ENCODE measurements at regions of chr14 and their contacts with region 1.

Region 1: GRCh38 chr14:103584326-103584915 is 21.7 kb downstream of the COA8 start:
- DNase-seq: no peak
- ATAC-seq: no peak
- H3K4me3 ChIP-seq: no peak overlapping the region
- H3K4me3 Mint-ChIP-seq: no peak overlapping the region
- H3K27ac ChIP-seq: no peak overlapping the region
- H3K27ac Mint-ChIP-seq: no peak overlapping the region
- H3K4me1 ChIP-seq: no peaks in the 10 kb centered on the region
- H3K4me1 Mint-ChIP-seq: peaks cover 0 to 2% (median 1%) of the 10 kb centered on the region in 3 donors
- H3K27me3 ChIP-seq: no peaks in the 10 kb centered on the region
- H3K27me3 Mint-ChIP-seq: no peaks in the 10 kb centered on the region

Region 2: DNA sequence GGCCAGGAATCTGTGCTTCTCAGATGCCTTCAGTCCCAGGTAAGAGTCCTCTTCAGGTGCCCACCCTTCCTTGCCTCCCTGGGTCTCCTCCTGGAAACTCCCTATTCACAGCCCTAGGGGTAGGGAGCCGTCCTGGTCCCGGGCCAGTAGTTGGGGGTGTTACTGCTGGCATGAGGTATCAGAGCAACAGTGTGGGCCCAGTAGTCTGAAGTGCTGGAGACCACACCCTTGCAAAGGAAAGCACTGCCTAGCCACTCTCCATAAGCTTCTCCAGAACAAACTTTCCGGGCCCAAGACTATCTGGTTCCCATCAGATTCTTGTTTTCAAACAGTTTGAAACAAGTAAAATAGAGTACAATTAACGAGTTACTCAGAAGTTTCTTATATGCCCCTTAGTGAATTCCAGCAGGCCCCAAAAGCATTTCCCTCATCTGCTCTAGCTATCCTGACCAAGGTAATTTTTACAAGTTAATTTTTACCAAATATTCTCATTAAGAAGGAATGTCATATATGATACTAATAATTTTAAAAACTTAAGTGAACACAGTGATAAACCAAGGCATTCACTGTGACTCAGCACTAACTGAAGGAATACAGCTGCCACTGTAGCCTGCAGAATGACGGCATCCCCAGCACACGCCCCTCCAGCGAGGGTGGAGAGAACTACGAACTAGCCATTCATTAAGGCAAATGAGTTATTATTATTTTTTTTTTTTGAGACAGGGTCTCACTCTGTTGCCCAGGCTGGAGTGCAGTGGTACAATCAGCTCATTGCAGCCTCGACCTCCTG is 1328.8 kb before region 1 on chr14:
- CTCF ChIA-PET with region 1: no interaction called
- POLR2A ChIA-PET with region 1: no interaction called
- DNase-seq: no peak
- ATAC-seq: no peak
- H3K4me3 ChIP-seq: no peak overlapping the region
- H3K4me3 Mint-ChIP-seq: no peak overlapping the region
- H3K27ac ChIP-seq: no peak overlapping the region
- H3K27ac Mint-ChIP-seq: no peak overlapping the region
- H3K4me1 ChIP-seq: no peaks in the 10 kb centered on the region
- H3K4me1 Mint-ChIP-seq: no peaks in the 10 kb centered on the region
- H3K27me3 ChIP-seq: peaks cover 0 to 8% of the 10 kb centered on the region in 2 experiments
- H3K27me3 Mint-ChIP-seq: no peaks in the 10 kb centered on the region

Region 3: DNA sequence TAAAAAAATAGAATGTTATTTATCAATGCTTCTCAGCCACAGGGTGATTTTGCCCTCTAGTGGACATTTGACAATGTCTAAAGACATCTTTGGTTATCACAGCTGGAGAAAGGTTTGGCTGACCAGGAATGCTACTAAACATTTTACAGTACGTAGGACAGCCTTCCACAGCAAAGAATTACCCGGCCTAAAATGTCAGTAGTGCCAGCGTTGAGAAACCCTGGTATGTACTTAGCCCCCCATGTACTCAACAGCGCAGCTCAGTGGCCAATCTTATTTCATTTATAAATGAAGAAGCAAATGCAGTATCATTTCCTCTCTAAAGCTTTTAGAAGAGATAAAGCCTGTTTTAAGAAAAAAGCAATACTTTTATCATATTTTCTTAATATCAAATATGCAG is 193.4 kb before region 1 on chr14:
- CTCF ChIA-PET with region 1: no interaction called
- POLR2A ChIA-PET with region 1: no interaction called
- DNase-seq: peak in 33 of 35 experiments; percentile 8 to 72 (median 42)
- ATAC-seq: peak; percentile 72 to 79 (median 78)
- H3K4me3 ChIP-seq: no peak overlapping the region
- H3K4me3 Mint-ChIP-seq: no peak overlapping the region
- H3K27ac ChIP-seq: peak overlapping the region; percentile 36
- H3K27ac Mint-ChIP-seq: peak overlapping the region in 1 of 2 donors; percentile 73
- H3K4me1 ChIP-seq: peaks cover 35 to 66% of the 10 kb centered on the region in 2 experiments
- H3K4me1 Mint-ChIP-seq: peaks cover 66 to 78% (median 73%) of the 10 kb centered on the region in 3 donors
- H3K27me3 ChIP-seq: no peaks in the 10 kb centered on the region
- H3K27me3 Mint-ChIP-seq: no peaks in the 10 kb centered on the region

Region 4: GRCh38 chr14:103552011-103552845 is 32.2 kb before region 1 on chr14:
- CTCF ChIA-PET with region 1: no interaction called
- POLR2A ChIA-PET with region 1: no interaction called
- DNase-seq: no peak
- ATAC-seq: no peak
- H3K4me3 ChIP-seq: no peak overlapping the region
- H3K4me3 Mint-ChIP-seq: no peak overlapping the region
- H3K27ac ChIP-seq: no peak overlapping the region
- H3K27ac Mint-ChIP-seq: no peak overlapping the region
- H3K4me1 ChIP-seq: peaks cover 0 to 2% of the 10 kb centered on the region in 2 experiments
- H3K4me1 Mint-ChIP-seq: peaks cover 3 to 15% (median 15%) of the 10 kb centered on the region in 3 donors
- H3K27me3 ChIP-seq: no peaks in the 10 kb centered on the region
- H3K27me3 Mint-ChIP-seq: no peaks in the 10 kb centered on the region

Region 5: DNA sequence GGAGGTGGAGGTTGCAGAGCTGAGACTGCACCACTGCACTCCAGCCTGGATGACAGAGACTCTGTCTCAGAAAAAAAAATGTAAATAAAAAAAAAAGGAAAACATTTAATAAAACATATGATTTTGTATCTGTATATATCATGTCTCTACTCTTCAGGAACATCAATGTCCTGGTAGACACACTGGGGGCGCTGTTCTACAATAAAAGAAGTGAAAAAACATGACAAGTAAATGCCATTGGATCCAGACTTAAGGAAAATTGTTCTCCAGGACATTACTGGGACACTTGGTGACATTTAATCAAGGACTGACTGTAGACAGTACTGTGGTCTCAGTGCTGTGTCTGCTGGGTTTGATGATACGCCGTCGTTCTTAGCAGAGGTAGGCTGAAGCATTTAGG is 29.1 kb after region 1 on chr14:
- CTCF ChIA-PET with region 1: no interaction called
- POLR2A ChIA-PET with region 1: no interaction called
- DNase-seq: peak in 3 of 35 experiments; percentile 14 to 20 (median 16)
- ATAC-seq: no peak
- H3K4me3 ChIP-seq: no peak overlapping the region
- H3K4me3 Mint-ChIP-seq: no peak overlapping the region
- H3K27ac ChIP-seq: no peak overlapping the region
- H3K27ac Mint-ChIP-seq: no peak overlapping the region
- H3K4me1 ChIP-seq: peaks cover under 1 to 2% of the 10 kb centered on the region in 2 experiments
- H3K4me1 Mint-ChIP-seq: no peaks in the 10 kb centered on the region
- H3K27me3 ChIP-seq: peaks cover 2 to 21% of the 10 kb centered on the region in 2 experiments
- H3K27me3 Mint-ChIP-seq: peaks cover 4 to 11% of the 10 kb centered on the region in 2 donors

Region 6: DNA sequence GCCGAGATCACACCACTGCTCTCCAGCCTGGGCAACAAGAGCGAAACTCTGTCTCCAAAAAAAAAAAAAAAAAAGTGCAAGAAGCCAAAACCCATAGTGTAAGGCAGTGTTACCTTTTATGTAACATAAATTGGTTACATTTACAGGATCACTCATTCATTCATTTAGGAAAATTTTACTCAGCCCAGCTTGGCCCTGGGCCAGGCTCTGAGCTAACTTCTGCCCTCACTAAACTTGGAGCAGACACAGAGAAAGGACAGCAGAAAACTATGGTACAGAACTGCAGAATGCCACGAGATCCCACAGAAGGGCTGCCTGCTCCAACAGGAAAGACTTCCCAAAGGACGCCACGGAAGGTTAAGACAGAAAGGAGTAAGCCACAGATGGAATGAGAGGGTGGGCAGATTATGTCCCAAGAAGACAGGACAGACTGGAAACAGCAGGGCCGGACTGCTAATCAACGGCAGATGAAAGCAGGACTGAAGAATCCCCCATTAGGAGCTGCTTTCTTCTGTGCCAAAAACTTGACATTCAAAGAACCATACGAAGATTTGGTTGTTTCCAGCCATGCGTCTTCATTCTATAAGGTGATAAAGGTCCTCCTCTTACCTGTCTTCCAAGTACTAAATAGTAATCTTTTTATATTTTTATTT is 244.0 kb after region 1 on chr14:
- CTCF ChIA-PET with region 1: interaction called in 1 of 2 experiments, 10 read pairs
- POLR2A ChIA-PET with region 1: no interaction called
- DNase-seq: no peak
- ATAC-seq: no peak
- H3K4me3 ChIP-seq: no peak overlapping the region
- H3K4me3 Mint-ChIP-seq: no peak overlapping the region
- H3K27ac ChIP-seq: no peak overlapping the region
- H3K27ac Mint-ChIP-seq: no peak overlapping the region
- H3K4me1 ChIP-seq: no peaks in the 10 kb centered on the region
- H3K4me1 Mint-ChIP-seq: peaks cover 10 to 14% (median 12%) of the 10 kb centered on the region in 3 donors
- H3K27me3 ChIP-seq: no peaks in the 10 kb centered on the region
- H3K27me3 Mint-ChIP-seq: no peaks in the 10 kb centered on the region

Region 7: GRCh38 chr14:103941462-103941861 is 357.0 kb after region 1 on chr14:
- CTCF ChIA-PET with region 1: no interaction called
- POLR2A ChIA-PET with region 1: interaction called in 1 of 2 experiments, 11 read pairs
- DNase-seq: no peak
- ATAC-seq: no peak
- H3K4me3 ChIP-seq: no peak overlapping the region
- H3K4me3 Mint-ChIP-seq: no peak overlapping the region
- H3K27ac ChIP-seq: no peak overlapping the region
- H3K27ac Mint-ChIP-seq: no peak overlapping the region
- H3K4me1 ChIP-seq: no peaks in the 10 kb centered on the region
- H3K4me1 Mint-ChIP-seq: no peaks in the 10 kb centered on the region
- H3K27me3 ChIP-seq: peaks cover 0 to 11% of the 10 kb centered on the region in 2 experiments
- H3K27me3 Mint-ChIP-seq: peaks cover 35 to 36% of the 10 kb centered on the region in 2 donors

Measured in T-cell (primary cell).